ENCODE measurements at regions of chr14 and their contacts with region 1.

Region 1: DNA sequence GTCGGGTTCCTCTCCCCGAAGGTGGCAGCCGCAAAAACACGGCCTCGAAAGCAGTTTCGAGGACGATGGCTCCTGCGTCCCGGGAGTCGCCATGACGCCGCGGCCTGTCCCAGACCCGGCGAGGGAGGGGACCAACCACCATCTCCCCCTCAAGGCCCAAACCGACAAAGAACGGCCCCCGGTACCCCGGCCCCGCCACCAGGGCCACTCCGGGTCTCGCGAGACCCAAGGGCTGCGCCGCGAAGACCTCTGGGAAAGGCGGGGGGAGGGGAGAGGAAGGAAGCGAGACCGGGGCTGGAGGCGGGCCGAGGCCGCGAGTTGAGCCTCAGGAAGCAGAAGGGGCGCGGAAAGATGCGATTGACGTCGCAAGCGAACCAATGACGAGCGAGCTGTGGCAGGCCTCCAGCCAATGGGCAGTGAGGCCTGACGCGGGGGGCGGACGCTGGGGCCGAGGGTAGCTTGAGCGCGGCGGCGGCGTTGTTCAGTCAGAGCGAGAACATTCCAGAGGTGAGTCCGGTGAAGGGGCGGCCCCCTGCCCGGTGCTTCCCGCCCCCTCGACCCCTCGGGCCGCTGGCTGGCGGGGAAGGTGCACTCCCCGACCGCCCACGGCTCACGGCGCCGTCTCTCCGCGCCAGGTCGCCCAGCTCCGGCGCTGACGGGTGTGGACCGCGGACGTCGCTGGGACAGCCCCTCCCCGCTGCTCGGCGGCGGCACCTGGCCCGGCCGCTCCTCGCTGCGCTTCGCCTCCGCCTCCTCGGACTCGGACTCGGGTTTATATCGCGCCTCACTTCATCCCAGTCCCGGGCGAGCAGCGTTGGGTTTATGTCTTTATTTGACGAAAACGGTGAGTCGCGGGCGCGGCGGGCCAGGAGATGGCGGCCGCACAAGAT is at the start of gene EIF5:
- DNase-seq: peak; percentile 97
- ATAC-seq: peak; percentile 95
- H3K4me3 Mint-ChIP-seq: peak within 1 kb of the TSS; percentile 91
- H3K27ac Mint-ChIP-seq: peak within 1 kb of the TSS; percentile 97
- H3K4me1 Mint-ChIP-seq: peaks cover 25% of the 10 kb centered on the region
- H3K27me3 Mint-ChIP-seq: no peaks in the 10 kb centered on the region
- total RNA-seq, gene EIF5: 202 to 222 TPM

Region 2: GRCh38 chr14:103346286-103346685 is 12.3 kb after region 1 on chr14:
- POLR2A ChIA-PET with region 1: interaction called, 27 read pairs
- DNase-seq: no peak
- ATAC-seq: no peak
- H3K4me3 Mint-ChIP-seq: no peak overlapping the region
- H3K27ac Mint-ChIP-seq: no peak overlapping the region
- H3K4me1 Mint-ChIP-seq: peaks cover 9% of the 10 kb centered on the region
- H3K27me3 Mint-ChIP-seq: no peaks in the 10 kb centered on the region

Region 3: DNA sequence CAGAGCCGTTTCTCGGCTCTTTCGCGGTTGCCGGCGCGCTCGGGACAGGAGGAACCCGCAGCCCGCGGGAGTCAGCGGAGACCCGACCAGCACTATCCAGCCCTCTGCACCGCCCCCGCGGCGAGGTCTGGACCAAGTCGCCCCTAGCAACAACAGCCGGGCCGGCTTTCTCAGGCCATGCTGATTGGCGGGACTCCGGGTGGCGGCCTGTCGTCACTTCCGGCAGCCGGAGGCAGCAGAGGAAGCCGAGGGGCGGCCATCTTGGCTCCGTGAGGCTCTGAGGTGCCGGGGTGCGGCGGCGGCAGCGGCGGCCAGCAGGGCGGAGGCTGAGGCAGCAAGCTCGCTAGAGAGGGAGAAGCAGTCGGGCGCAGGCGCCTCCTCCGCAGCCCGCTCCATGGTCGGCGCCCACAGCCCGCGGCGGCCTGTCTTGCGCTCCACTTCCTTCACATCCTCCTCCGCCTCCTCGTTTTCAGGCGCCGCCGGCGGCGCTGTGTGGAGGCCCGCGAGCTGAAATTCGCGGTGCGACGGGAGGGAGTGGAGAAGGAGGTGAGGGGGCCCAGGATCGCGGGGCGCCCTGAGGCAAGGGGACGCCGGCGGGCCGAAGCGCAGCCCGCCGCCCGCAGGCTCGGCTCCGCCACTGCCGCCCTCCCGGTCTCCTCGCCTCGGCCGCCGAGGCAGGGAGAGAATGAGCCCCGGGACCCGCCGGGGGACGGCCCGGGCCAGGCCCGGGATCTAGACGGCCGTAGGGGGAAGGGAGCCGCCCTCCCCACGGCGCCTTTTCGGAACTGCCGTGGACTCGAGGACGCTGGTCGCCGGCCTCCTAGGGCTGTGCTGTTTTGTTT is 51.4 kb after region 1 on chr14 and contains the start of gene MARK3:
- POLR2A ChIA-PET with region 1: interaction called, 21 read pairs
- DNase-seq: peak; percentile 95
- ATAC-seq: peak; percentile 90
- H3K4me3 Mint-ChIP-seq: peak within 1 kb of the TSS; percentile 96
- H3K27ac Mint-ChIP-seq: peak within 1 kb of the TSS; percentile 97
- H3K4me1 Mint-ChIP-seq: peaks cover 21% of the 10 kb centered on the region
- H3K27me3 Mint-ChIP-seq: peaks cover 9% of the 10 kb centered on the region
- total RNA-seq, gene MARK3: 87.4 to 88.0 TPM

Region 4: GRCh38 chr14:103391048-103391447 is 57.0 kb after region 1 on chr14:
- POLR2A ChIA-PET with region 1: interaction called, 21 read pairs
- DNase-seq: no peak
- ATAC-seq: peak; percentile 75
- H3K4me3 Mint-ChIP-seq: no peak overlapping the region
- H3K27ac Mint-ChIP-seq: no peak overlapping the region
- H3K4me1 Mint-ChIP-seq: peaks cover 45% of the 10 kb centered on the region
- H3K27me3 Mint-ChIP-seq: no peaks in the 10 kb centered on the region